Head of caudate nucleus (tissue), 42 donors: ENCODE measurements at regions of chr17 and their contacts with region 1.

Region 1: DNA sequence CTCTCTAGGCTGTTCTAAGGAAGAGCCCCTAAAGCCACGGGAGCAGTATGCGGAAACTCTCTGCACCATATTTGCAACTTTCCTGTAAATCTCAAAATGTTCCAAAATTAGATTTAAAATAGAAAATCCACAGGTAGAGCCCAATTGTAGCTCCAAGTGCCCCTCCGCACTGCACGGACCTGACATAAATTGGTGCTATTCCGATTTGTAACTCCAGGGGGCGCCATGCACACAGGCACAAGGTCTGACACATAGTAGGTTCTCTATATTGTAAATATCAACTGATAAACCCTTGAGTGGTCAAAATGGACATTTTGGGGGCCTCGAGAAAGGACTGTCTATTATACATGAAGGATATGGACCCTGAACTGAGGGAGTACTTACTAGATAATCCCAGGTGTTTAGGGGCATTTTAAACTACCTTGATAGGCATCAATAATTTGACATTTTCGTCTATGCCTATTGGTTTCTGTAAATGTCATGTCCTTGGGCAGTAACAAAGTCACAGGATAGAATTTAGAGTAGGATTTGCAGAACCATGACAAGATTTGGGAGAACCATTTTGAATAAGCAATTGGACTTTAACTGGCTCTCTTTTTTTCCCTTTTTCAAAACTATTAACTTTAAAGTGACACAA is 36.6 kb upstream of the TMEM132E start:
- DNase-seq: peak in 37 of 42 donors; percentile 13 to 84 (median 55)

Region 2: DNA sequence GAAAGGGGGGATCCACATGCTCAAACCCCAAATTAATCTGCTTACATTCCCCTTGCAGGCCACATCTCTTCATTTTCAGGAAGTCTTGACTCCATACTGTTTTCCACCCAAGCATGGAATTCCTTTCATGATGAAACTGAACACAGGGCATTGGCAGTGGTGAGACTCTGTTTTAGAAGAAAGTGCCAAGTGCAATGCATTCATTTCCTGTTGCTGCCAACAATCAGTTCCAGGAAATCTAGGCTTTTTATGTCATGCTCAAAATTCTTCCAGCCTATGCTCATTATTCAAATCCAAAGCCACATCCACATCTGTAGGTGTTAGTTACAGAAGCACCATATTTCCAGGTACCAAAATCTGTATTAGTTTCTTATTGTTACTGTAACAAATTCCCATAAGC is 283.7 kb before region 1 on chr17:
- intact Hi-C with region 1: no loop called
- DNase-seq: no peak

Region 3: GRCh38 chr17:34626141-34626681 is 83.4 kb after region 1 on chr17:
- intact Hi-C with region 1: no loop called
- DNase-seq: no peak

Region 4: GRCh38 chr17:34637548-34638525 is 95.0 kb after region 1 on chr17:
- intact Hi-C with region 1: loop called (anchors 2 kb)
- DNase-seq: peak; percentile 42 to 92 (median 81)